ENCODE measurements at regions of chr10 and their contacts with region 1.

Region 1: DNA sequence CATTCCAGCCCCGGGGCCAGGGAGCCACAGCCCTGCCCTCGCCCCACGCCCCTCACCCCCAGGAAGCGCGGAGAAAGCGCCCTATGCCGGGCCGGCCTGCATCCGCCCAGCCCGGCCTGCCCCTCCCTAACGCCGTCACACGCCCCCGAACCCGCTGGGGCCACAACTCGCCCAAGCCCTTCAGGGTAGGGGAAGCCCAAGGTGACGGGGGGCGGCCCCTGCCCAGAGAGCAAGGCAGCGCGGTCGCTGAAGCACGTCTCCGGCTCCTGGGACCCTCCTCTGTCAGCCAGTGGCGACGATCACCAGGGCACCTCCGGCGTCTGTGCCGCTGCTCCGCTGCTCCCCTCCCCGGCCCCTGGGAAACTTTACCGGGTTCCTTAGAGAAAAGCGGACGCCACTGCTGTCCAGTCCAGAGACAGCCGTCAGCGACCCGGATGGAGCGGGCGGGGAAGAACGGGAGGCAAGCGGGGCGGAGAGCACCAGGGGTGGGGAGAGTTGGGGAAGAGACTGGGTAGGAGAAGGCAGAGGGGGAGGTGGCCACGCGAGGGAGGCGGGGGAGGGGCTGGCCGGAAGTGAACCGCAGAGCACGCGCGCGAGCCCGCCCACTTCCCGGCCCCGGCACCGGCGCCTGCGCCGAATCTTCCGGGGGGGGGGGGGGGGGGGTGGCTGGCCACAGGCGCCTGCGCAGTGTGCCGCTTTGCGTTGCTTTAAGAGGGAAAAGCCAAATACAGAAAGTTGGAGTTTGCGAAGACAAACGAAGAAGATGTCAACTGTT is at the start of gene HERC4:
- DNase-seq: peak; percentile 94
- H3K4me3 ChIP-seq: peak within 1 kb of the TSS; percentile 100
- H3K27ac ChIP-seq: peak within 1 kb of the TSS; percentile 97
- H3K4me1 ChIP-seq: peaks cover 23% of the 10 kb centered on the region
- H3K27me3 ChIP-seq: no peaks in the 10 kb centered on the region
- CTCF ChIP-seq: no peak
- total RNA-seq, gene HERC4: 48.5 and 52.2 TPM in 2 replicates

Region 2: DNA sequence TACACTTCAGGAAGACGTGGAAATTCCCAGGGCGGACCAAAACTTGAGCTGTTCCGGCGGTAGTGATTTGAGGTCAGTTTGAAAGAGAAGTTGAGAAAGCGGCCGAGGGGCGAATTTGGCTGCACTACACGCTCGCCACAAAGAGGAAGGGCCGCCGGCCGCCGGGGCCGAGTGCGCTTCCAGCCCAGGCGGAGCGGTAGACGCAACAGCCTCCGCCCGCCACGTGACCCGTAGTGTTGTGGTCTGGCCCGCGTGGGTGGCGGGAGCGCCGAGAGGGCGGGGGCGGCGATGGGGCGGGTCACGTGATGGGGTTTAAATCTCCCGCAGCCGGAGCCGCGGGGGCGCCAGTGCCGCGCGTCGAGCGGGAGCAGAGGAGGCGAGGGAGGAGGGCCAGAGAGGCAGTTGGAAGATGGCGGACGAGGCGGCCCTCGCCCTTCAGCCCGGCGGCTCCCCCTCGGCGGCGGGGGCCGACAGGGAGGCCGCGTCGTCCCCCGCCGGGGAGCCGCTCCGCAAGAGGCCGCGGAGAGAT is 190.6 kb before region 1 on chr10 and contains the start of gene SIRT1:
- CTCF ChIA-PET with region 1: no interaction called
- POLR2A ChIA-PET with region 1: no interaction called
- intact Hi-C with region 1: loop called (anchors 10 kb)
- DNase-seq: peak; percentile 98
- H3K4me3 ChIP-seq: peak within 1 kb of the TSS; percentile 92
- H3K27ac ChIP-seq: peak within 1 kb of the TSS; percentile 87
- H3K4me1 ChIP-seq: peaks cover 16% of the 10 kb centered on the region
- H3K27me3 ChIP-seq: no peaks in the 10 kb centered on the region
- CTCF ChIP-seq: 0 out of 2 replicates have a peak, but pooled peaks have one; percentile 7
- total RNA-seq, gene SIRT1: 41.0 and 42.6 TPM in 2 replicates

Region 3: DNA sequence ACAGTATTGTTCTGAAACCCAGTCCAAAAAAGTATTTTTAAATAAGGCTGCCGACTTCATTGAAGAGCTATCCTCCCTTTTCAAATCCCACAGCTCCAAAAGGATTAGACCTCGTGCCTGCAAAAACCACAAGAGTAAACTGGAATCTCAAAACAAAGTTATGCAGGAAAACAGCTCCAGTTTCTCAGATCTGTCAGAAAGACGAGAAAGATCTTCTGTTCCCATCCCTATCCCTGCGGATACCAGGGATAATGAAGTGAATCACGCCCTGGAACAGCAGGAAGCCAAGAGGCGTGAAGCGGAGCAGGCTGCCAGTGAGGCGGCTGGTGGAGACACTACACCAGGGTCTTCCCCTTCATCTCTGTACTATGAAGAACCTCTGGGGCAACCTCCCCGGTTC is 46.9 kb after region 1 on chr10:
- CTCF ChIA-PET with region 1: no interaction called
- POLR2A ChIA-PET with region 1: no interaction called
- intact Hi-C with region 1: no loop called
- DNase-seq: no peak
- H3K4me3 ChIP-seq: no peak overlapping the region
- H3K27ac ChIP-seq: no peak overlapping the region
- H3K4me1 ChIP-seq: peaks cover 16% of the 10 kb centered on the region
- H3K27me3 ChIP-seq: no peaks in the 10 kb centered on the region
- CTCF ChIP-seq: no peak

Region 4: DNA sequence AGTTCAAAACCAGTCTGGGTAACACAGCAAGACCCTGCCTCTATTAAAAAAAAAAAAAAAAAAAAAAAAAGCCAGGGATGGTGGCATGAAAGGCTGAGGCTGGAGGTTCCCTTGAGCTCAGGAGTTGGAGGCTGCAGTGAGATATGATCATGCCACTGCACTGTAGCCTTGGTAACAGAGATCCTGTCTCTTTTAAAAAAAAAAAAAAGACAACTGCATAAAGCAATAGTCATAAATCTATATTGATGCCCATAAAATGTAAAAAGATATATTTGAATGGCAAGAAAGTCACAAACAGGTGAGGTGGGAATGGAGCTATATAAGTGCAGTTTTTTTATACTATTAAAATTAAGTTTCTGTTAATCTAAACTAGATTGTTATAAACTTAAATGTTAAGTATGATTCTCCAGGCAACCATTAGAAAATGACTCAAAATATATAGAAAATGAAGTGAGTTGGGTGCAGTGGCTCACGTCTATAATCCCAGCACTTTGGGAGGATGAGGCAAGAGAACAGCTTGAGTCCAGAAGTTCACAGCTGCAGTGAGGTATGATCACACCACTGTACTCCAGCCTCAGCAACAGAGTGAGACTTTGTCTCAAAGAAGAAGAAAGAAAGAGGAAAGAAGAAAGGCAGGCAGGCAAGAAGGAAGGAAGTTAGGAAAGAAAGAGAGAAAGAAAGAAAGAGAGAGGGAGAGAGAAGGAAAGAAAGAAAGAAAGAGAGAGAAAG is 243.5 kb after region 1 on chr10:
- CTCF ChIA-PET with region 1: no interaction called
- POLR2A ChIA-PET with region 1: no interaction called
- intact Hi-C with region 1: no loop called
- DNase-seq: no peak
- H3K4me3 ChIP-seq: no peak overlapping the region
- H3K27ac ChIP-seq: no peak overlapping the region
- H3K4me1 ChIP-seq: no peaks in the 10 kb centered on the region
- H3K27me3 ChIP-seq: no peaks in the 10 kb centered on the region
- CTCF ChIP-seq: no peak

Region 5: GRCh38 chr10:68331455-68332258 is 256.7 kb after region 1 on chr10 and contains the start of gene HNRNPH3:
- CTCF ChIA-PET with region 1: no interaction called
- POLR2A ChIA-PET with region 1: no interaction called
- intact Hi-C with region 1: loop called (anchors 10 kb)
- DNase-seq: peak; percentile 99
- H3K4me3 ChIP-seq: peak within 1 kb of the TSS; percentile 94
- H3K27ac ChIP-seq: peak within 1 kb of the TSS; percentile 99
- H3K4me1 ChIP-seq: peaks cover 50% of the 10 kb centered on the region
- H3K27me3 ChIP-seq: no peaks in the 10 kb centered on the region
- CTCF ChIP-seq: no peak
- total RNA-seq, gene HNRNPH3: 237 and 251 TPM in 2 replicates

Measured in A673 (cell line).